ENCODE measurements at regions of chr9 and their contacts with region 1.

Region 1: GRCh38 chr9:29063031-29063430 is 1489.8 kb upstream of the C9orf72 start:
- DNase-seq: no peak
- H3K4me3 ChIP-seq: no peak overlapping the region
- H3K27ac ChIP-seq: no peak overlapping the region
- H3K4me1 ChIP-seq: no peaks in the 10 kb centered on the region
- H3K27me3 ChIP-seq: no peaks in the 10 kb centered on the region
- CTCF ChIP-seq: no peak

Region 2: DNA sequence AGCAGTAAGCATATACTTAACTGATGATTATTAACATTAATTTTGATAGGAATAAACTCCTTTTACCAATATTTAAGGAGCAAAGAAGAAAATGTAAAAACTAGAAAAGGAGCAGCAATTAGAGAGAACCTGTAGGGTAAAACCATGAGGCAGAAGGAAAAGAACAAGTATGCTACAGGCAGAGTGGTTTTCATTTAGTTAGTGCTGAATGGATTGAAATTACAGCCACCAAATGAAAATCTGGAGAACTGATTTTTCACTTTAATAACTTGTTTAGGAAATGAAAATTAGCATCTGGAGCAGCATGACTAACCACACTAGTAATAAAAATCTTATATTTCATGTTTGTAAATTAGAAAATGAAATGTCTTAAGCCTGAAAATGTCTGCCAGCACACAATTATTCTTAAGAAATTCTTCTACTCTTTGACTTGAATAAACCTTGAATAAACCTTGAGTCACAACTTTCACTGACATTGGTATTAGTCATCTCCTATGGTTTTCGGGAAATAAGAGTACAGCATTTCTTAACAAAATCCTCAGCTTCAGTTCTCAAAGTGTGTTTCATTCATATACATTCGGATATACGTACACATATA is 15.1 kb after region 1 on chr9:
- CTCF ChIA-PET with region 1: no interaction called
- POLR2A ChIA-PET with region 1: interaction called, 13 read pairs
- intact Hi-C with region 1: no loop called
- DNase-seq: peak in 1 of 2 experiments; percentile 50
- H3K4me3 ChIP-seq: no peak overlapping the region
- H3K27ac ChIP-seq: 0 out of 2 replicates have a peak overlapping the region, but pooled peaks have one; percentile 26
- H3K4me1 ChIP-seq: no peaks in the 10 kb centered on the region
- H3K27me3 ChIP-seq: no peaks in the 10 kb centered on the region
- CTCF ChIP-seq: no peak

Region 3: DNA sequence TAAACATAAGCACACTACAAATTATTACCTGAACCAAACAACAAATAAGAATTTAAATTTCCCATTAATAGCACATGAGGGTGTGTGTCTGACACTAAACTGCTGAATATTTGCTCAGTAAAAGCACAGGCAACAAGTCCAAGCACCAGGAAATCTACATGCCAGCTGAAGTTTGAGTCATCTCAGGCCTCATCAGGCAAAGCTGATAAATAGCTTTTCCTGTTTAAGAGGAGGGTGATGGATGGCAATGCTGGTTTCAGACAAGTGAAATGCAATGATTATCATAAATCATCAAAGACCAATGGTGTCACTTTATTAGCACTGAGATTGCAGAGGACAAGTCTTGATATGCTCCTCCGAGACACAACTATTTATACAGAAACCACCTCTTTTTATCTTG is 178.3 kb after region 1 on chr9:
- CTCF ChIA-PET with region 1: no interaction called
- POLR2A ChIA-PET with region 1: no interaction called
- intact Hi-C with region 1: no loop called
- DNase-seq: no peak
- H3K4me3 ChIP-seq: no peak overlapping the region
- H3K27ac ChIP-seq: no peak overlapping the region
- H3K4me1 ChIP-seq: no peaks in the 10 kb centered on the region
- H3K27me3 ChIP-seq: no peaks in the 10 kb centered on the region
- CTCF ChIP-seq: no peak

Measured in PC-9 (cell line).